ENCODE measurements at regions of chr18 and their contacts with region 1.

Region 1: GRCh38 chr18:75204269-75204731 is 4.6 kb downstream of the PTGR3 start:
- DNase-seq: no peak
- H3K4me3 ChIP-seq: peak overlapping the region; percentile 44 to 100 (median 80)
- H3K27ac ChIP-seq: peak overlapping the region; percentile 98 to 99 (median 98)
- H3K4me1 ChIP-seq: peaks cover 0 to 72% (median 62%) of the 10 kb centered on the region in 4 donors
- H3K27me3 ChIP-seq: no peaks in the 10 kb centered on the region
- CTCF ChIP-seq: no peak
- EP300 ChIP-seq: no peak
- POLR2A ChIP-seq: no peak

Region 2: DNA sequence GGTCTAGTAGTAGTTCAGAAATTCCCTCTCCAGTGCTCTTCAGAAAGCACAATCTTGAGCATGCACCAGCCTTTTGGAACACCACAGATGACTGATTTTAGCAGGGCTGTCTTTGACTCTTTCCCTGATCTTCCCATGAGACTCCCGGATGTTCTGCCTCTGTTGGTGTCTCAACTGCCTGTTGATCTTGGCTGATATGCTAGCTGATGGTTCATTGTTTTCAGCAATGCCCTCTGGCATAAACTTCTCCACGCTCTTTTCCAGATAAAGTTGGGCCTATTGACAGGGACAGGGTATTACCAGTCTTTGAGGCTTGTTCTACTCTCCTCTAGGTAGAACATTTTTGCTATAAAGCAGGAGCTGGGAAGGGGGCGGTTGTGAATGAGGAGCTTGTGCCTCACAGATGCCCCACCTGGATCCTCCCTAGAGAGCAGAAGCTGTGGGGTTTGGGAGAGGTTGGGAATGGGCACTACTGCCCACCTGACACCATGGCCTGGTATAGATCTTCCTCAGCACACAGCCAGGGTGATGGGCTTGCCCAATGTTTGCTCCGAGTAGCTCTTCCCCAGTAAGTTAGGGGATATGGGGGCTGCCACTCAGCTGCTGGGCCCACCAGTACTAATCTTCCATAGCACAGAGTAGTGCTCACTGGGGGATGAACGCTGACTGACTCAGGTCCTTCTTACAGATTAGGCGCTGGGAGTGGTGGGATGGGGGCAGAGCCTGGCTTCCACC is 106.6 kb before region 1 on chr18:
- intact Hi-C with region 1: no loop called
- DNase-seq: no peak
- H3K4me3 ChIP-seq: no peak overlapping the region
- H3K27ac ChIP-seq: no peak overlapping the region
- H3K4me1 ChIP-seq: no peaks in the 10 kb centered on the region
- H3K27me3 ChIP-seq: no peaks in the 10 kb centered on the region
- CTCF ChIP-seq: no peak
- EP300 ChIP-seq: no peak
- POLR2A ChIP-seq: no peak

Region 3: GRCh38 chr18:75478996-75479880 is 274.9 kb after region 1 on chr18:
- intact Hi-C with region 1: loop called (anchors 5 kb)
- DNase-seq: no peak
- H3K4me3 ChIP-seq: no peak overlapping the region
- H3K27ac ChIP-seq: no peak overlapping the region
- H3K4me1 ChIP-seq: peaks cover 0 to 22% (median 5%) of the 10 kb centered on the region in 4 donors
- H3K27me3 ChIP-seq: no peaks in the 10 kb centered on the region
- CTCF ChIP-seq: peak in 2 of 4 experiments; percentile 52 to 53
- EP300 ChIP-seq: no peak
- POLR2A ChIP-seq: no peak

Region 4: DNA sequence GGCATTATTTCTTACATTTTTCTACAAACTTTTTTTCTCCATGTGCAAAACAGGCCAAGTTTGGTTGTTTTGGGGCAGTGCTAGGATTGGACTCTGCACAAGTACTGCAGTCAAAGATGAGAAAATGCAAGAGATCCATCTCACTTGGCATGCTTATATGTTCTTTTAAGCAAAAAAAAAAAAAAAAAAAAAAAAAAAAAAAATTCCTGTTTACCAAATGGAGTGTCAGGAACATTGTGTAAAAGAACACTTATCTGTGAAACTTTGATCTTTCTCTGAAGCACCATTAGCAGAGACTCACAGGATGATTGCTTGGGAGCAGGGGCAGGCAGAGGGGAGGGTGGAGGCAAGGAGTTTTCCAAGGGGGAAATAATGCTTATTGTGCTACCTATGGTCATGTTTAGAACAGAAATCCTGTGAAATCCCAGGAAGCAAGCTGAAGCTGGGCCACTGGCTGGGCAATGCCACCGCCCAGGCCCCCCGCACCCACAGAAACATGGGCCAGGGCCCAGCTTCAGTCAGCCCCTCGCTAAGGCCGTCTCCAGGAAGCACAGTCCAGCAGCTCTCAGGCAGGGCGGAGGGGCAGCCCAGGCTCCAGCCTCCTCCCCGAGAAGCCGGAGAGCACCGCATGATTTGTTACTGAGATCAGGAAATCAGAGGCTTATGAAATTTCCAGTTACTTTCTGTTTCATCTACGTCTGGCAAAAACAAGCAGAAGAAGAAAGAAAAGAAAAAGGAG is 1061.4 kb after region 1 on chr18:
- intact Hi-C with region 1: loop called (anchors 5 kb)
- DNase-seq: peak; percentile 87
- H3K4me3 ChIP-seq: peak overlapping the region; percentile 6 to 31 (median 28)
- H3K27ac ChIP-seq: peak overlapping the region; percentile 74 to 86 (median 84)
- H3K4me1 ChIP-seq: peaks cover 0 to 28% (median 19%) of the 10 kb centered on the region in 4 donors
- H3K27me3 ChIP-seq: no peaks in the 10 kb centered on the region
- CTCF ChIP-seq: no peak
- EP300 ChIP-seq: no peak
- POLR2A ChIP-seq: no peak